MCF 10A (cell line): ENCODE measurements at regions of chr1 and their contacts with region 1.

Region 1: GRCh38 chr1:214296860-214297745 is 16.1 kb downstream of the SMYD2 start:
- DNase-seq: peak; percentile 24
- H3K4me3 Mint-ChIP-seq: no peak overlapping the region
- H3K27ac Mint-ChIP-seq: peak overlapping the region; percentile 10
- H3K4me1 Mint-ChIP-seq: peaks cover 23% of the 10 kb centered on the region
- H3K27me3 Mint-ChIP-seq: no peaks in the 10 kb centered on the region
- CTCF ChIP-seq: no peak

Region 2: DNA sequence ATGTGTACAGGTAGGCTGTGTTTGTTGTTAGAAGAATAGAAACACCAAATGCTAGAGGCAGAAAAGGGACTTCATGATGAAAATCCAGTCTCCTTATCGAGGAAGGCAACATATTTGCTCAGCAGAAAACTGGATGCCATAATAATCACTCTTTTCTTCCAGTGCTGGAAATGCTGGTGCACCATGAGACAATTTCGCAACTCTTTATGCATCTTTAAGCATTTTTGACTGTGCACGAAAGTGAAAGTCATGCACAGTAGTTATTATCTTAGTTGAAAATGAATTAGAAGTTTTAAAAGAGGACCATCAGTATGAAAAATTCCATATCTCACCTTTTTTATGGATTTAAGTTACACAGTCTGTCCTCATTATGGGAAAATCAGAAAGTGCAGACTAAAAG is 12.9 kb after region 1 on chr1:
- CTCF ChIA-PET with region 1: interaction called, 19 read pairs
- POLR2A ChIA-PET with region 1: interaction called, 5 read pairs
- intact Hi-C with region 1: loop called (anchors 2 kb)
- DNase-seq: peak; percentile 34
- H3K4me3 Mint-ChIP-seq: no peak overlapping the region
- H3K27ac Mint-ChIP-seq: no peak overlapping the region
- H3K4me1 Mint-ChIP-seq: no peaks in the 10 kb centered on the region
- H3K27me3 Mint-ChIP-seq: no peaks in the 10 kb centered on the region
- CTCF ChIP-seq: no peak

Region 3: DNA sequence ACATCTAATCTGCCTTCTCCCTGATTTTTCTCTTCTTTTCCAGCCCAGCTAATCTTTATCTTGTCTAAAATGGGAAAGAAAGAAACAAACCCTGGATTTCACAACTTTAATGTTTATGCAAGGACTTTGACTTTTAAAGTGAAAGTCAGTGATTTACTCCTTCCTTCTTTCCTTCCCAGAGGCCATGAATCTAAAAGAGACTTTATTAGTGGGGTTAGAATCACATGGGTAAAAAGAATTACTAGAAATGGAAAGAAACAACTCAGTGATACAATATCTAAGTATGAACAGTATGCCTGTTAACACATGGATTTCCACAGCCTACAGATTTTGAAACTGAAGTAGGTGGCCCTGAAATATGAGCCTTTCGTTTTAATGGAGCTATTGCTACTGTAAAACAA is 725.6 kb after region 1 on chr1:
- CTCF ChIA-PET with region 1: no interaction called
- POLR2A ChIA-PET with region 1: no interaction called
- intact Hi-C with region 1: no loop called
- DNase-seq: peak; percentile 76
- H3K4me3 Mint-ChIP-seq: peak overlapping the region; percentile 56
- H3K27ac Mint-ChIP-seq: peak overlapping the region; percentile 97
- H3K4me1 Mint-ChIP-seq: peaks cover 40% of the 10 kb centered on the region
- H3K27me3 Mint-ChIP-seq: no peaks in the 10 kb centered on the region
- CTCF ChIP-seq: no peak